ENCODE measurements at regions of chr13 and their contacts with region 1.

Region 1: DNA sequence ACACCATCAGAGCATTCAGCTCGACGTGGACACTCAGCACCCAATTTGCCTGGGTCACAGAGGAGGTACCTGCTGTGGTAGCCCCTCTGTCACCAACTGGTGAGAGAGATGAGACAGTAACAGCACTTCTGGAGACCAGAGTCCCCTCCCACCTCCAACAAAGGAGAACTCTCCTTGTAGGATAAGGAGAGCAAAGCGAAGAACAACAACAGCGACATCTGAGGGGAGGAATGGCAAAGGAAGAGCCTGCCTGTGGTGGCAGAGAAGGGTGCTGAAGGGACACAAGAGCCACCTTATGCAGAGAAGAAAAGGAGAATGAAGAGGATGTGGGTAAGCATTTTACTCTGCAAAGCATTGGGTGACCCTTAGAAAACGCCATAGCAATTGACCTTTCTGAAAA is 167.8 kb downstream of the ABCC4 start:
- DNase-seq: no peak
- ATAC-seq: no peak
- H3K4me3 ChIP-seq: no peak overlapping the region
- H3K4me3 Mint-ChIP-seq: no peak overlapping the region
- H3K27ac ChIP-seq: no peak overlapping the region
- H3K27ac Mint-ChIP-seq: no peak overlapping the region
- H3K4me1 ChIP-seq: no peaks in the 10 kb centered on the region
- H3K4me1 Mint-ChIP-seq: peaks cover 0 to 4% (median 0%) of the 10 kb centered on the region in 3 donors
- H3K27me3 ChIP-seq: no peaks in the 10 kb centered on the region
- H3K27me3 Mint-ChIP-seq: no peaks in the 10 kb centered on the region

Region 2: GRCh38 chr13:95113601-95114000 is 19.9 kb before region 1 on chr13:
- CTCF ChIA-PET with region 1: no interaction called
- POLR2A ChIA-PET with region 1: interaction called in 1 of 2 experiments, 12 read pairs
- DNase-seq: no peak
- ATAC-seq: no peak
- H3K4me3 ChIP-seq: no peak overlapping the region
- H3K4me3 Mint-ChIP-seq: no peak overlapping the region
- H3K27ac ChIP-seq: no peak overlapping the region
- H3K27ac Mint-ChIP-seq: no peak overlapping the region
- H3K4me1 ChIP-seq: no peaks in the 10 kb centered on the region
- H3K4me1 Mint-ChIP-seq: no peaks in the 10 kb centered on the region
- H3K27me3 ChIP-seq: no peaks in the 10 kb centered on the region
- H3K27me3 Mint-ChIP-seq: no peaks in the 10 kb centered on the region

Region 3: GRCh38 chr13:95378603-95379002 is 245.1 kb after region 1 on chr13:
- CTCF ChIA-PET with region 1: interaction called in 1 of 2 experiments, 11 read pairs
- POLR2A ChIA-PET with region 1: no interaction called
- DNase-seq: no peak
- ATAC-seq: no peak
- H3K4me3 ChIP-seq: no peak overlapping the region
- H3K4me3 Mint-ChIP-seq: no peak overlapping the region
- H3K27ac ChIP-seq: no peak overlapping the region
- H3K27ac Mint-ChIP-seq: no peak overlapping the region
- H3K4me1 ChIP-seq: peaks cover 0 to 6% of the 10 kb centered on the region in 2 experiments
- H3K4me1 Mint-ChIP-seq: peaks cover 0 to 5% (median 3%) of the 10 kb centered on the region in 3 donors
- H3K27me3 ChIP-seq: no peaks in the 10 kb centered on the region
- H3K27me3 Mint-ChIP-seq: peaks cover 0 to 13% of the 10 kb centered on the region in 2 donors

Measured in T-cell (primary cell).